ENCODE measurements at regions of chr6 and their contacts with region 1.

Region 1: DNA sequence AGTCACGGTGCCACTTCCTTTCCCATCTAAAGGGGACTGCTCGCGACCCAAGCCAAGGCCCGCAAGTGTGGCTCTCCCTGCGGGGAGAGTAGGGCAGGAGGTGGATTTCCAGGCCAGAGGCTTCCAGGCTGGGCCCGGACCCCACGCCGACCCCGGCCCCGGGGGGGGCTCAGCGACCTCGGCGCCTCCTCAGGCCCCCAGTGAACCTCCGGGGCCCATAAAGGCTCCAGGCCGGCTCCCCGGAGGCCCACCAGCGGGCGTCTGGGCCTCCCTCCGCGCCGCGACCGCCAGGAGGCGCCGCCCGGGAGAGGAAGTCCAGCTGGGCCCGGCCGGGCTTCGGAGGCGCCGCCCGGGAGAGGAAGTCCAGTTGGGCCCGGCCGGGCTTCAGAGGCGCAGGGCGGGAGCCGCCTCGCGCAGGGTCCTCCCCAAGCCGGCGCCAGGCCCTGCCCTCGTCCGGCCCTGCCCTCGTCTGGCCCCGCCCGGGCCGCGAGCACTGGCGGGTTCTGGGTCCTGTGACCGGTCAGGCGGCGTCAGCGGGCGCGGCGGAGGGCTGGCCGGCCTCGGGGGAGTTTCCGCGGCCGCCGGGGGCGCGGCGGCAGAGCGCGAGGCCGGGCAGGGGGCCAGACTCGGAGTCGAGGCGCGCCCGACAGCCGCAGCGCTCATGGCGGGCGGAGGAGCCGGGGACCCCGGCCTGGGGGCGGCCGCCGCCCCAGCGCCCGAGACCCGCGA is at the start of gene RAB32:
- DNase-seq: peak; percentile 97 to 98
- ATAC-seq: peak; percentile 98
- H3K4me3 ChIP-seq: peak within 1 kb of the TSS; percentile 77 to 92
- H3K27ac ChIP-seq: peak within 1 kb of the TSS; percentile 97 to 99
- H3K4me1 ChIP-seq: no peaks in the 10 kb centered on the region
- H3K27me3 ChIP-seq: no peaks in the 10 kb centered on the region
- total RNA-seq, gene RAB32: 31.9 to 61.2 TPM

Region 2: DNA sequence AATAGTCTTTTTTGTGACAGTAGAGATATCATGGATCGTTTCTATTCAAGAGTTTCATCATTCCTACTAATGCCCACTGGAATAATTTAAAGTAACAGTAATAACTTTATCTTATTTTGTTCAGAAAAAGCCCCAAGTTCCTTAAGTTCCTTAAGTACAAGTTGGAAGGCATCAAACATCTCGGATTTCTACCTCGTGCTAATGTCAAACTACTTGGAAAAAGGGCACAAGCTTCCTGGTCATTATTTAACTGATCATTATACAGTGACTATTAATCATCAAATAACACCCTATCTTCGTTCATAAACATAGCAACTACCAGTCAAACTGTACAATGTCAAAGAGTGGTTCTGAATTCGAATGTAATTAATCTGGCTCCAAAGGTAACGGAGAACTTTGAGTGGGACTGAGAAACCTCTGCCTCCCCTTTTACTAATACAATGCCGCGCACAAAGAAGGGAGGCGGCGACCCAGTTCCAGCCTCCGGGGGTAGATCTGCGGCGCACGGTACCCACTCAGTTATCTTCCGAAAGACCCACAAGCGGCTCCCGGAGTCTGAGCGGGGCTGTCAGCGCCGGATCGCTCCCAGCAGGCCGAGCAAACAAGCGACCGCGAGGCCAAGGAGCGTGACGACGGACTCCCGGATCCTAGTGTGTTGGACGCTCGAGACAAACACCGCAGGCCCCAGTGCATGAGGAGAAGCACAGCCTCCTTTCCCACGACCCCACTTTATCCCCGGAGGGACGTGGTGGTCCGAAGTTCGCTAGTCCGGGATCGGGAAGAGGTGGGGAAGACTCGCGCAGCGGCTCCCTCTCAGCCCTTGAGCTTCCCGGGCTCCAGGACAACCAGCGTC is 579.9 kb before region 1 on chr6:
- intact Hi-C with region 1: loop called (anchors 5 kb)
- DNase-seq: peak; percentile 73 to 84
- ATAC-seq: peak; percentile 79
- H3K4me3 ChIP-seq: peak overlapping the region; percentile 55 to 70
- H3K27ac ChIP-seq: peak overlapping the region in 1 of 2 donors; percentile 69
- H3K4me1 ChIP-seq: no peaks in the 10 kb centered on the region
- H3K27me3 ChIP-seq: no peaks in the 10 kb centered on the region

Region 3: DNA sequence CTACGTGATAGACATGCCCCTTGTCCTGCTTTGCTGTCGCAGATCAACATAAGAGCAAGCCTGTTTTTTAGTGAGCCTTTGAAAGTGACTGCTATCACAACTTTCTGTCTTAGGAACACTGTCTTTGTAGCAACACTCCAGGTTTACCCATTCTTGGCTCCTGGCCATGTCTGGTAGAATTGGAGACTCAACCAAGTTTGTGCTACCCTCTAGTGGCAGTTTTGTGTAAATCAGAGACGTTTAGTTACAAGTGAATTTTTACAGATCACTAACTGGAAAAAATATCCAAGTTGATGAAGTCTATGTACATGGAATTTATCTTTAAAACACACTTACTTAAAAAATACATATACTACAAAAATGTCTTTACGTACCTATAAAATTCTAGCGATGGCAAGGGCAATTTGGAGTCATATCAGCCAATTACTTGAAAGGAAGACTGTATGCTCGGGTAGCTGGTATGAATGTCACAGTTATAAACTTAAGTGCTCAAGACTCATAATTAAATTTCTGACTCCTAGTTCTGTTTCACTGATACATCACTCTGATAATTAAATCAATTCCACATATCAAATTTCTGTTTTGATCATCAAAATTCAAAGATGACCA is 156.8 kb after region 1 on chr6:
- intact Hi-C with region 1: loop called (anchors 2 to 5 kb)
- DNase-seq: peak in 1 of 2 donors; percentile 71
- ATAC-seq: peak; percentile 80
- H3K4me3 ChIP-seq: no peak overlapping the region
- H3K27ac ChIP-seq: no peak overlapping the region
- H3K4me1 ChIP-seq: no peaks in the 10 kb centered on the region
- H3K27me3 ChIP-seq: no peaks in the 10 kb centered on the region

Measured in aorta (tissue), 5 donors.